Activated CD4-positive, alpha-beta T cell treated with anti-CD3 and anti-CD28 coated beads for 36 hours (primary cell): ENCODE measurements at regions of chr7 and their contacts with region 1.

Region 1: DNA sequence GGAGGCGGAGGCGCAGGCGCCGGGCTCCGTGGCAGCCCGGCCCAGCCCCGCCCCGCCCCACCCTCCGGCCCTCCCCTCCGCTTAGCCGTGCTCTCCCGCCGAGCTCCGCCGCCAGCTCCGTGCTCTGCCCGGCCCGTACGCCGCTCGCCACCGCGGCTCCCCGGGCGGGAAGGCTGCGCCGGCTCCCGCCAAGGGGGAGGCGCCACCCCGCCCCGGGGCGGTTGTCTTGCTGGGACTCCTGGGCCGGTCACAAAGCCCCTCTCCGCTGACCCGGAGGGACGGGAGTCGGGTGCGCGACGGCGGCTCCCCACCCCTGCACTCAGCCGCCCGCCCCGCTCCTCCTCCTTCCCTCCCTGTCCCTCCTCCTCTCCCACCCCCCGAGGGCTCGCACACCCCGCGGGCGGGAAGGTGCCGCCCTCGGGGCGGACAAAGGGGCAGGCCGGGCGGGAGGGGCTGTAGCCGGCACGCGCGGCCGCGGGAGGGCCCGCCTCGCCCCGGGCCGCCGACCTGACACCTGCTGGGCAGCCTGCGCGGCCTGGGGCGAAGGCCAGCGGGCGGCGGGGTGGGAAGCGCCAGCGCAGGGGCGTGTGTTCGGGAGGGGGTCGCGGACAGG is 11.5 kb upstream of the SP8 start:
- DNase-seq: peak; percentile 30
- ATAC-seq: peak; percentile 81
- H3K4me3 Mint-ChIP-seq: no peak overlapping the region
- H3K27ac Mint-ChIP-seq: no peak overlapping the region
- H3K4me1 Mint-ChIP-seq: peaks cover 16% of the 10 kb centered on the region
- H3K27me3 Mint-ChIP-seq: peaks cover 49% of the 10 kb centered on the region

Region 2: GRCh38 chr7:19107356-19108146 is 1690.6 kb before region 1 on chr7:
- CTCF ChIA-PET with region 1: no interaction called
- POLR2A ChIA-PET with region 1: no interaction called
- intact Hi-C with region 1: loop called in 1 of 2 experiments (anchors 5 kb)
- DNase-seq: no peak
- ATAC-seq: no peak
- H3K4me3 Mint-ChIP-seq: no peak overlapping the region
- H3K27ac Mint-ChIP-seq: no peak overlapping the region
- H3K4me1 Mint-ChIP-seq: peaks cover 2% of the 10 kb centered on the region
- H3K27me3 Mint-ChIP-seq: peaks cover 85% of the 10 kb centered on the region

Region 3: GRCh38 chr7:20786779-20787659 is 11.2 kb before region 1 on chr7 and contains the start of gene SP8:
- CTCF ChIA-PET with region 1: interaction called, 5 read pairs
- POLR2A ChIA-PET with region 1: no interaction called
- intact Hi-C with region 1: loop called (anchors 1 to 2 kb)
- DNase-seq: peak; percentile 64
- ATAC-seq: peak; percentile 72
- H3K4me3 Mint-ChIP-seq: peak within 1 kb of the TSS; percentile 66
- H3K27ac Mint-ChIP-seq: peak within 1 kb of the TSS; percentile 37
- H3K4me1 Mint-ChIP-seq: peaks cover 26% of the 10 kb centered on the region
- H3K27me3 Mint-ChIP-seq: peaks cover 68% of the 10 kb centered on the region
- total RNA-seq, gene SP8: not detected

Region 4: DNA sequence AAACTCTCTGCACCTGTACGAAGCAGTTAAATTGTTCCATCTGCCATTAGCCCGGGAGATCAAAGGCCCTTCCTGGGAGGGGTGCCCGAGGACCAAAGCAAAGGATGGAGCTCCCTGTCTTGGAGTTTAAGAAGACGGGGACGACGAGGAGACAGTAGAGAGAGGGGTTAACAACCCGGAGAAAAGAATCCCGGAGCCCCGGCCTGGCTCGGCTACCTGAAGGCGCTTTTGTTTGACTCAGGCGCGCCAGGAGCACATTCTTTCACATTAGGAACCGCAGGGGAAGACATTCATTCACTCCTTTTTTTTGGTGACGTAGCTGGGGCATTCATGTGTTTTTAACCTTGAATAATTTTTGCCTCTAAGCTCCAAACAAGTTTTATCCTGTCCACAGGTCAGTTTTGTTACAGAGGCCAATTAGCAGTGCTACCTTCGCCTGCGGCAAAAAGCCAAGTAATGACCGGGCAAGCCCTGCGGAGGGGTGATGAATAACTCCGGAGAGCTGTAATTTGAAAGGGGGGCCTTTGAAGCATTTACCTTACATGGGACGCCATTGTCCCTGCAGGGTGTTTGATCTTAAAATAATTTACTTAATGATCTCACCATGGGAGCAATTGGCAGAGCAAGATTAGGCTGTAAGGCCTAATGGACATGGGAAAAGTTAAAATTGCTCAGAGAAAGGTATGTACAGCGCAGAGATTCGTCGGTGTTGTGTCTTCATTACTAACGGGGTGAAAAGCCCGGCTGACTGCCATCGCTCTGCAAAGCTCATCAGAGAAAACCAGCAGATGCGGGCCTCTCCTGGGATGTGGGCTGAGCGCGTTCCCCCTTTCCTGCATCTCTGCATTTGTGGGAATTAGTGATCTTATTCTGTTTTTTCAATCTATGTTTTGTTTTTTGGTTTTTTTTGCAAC is 371.7 kb after region 1 on chr7:
- CTCF ChIA-PET with region 1: no interaction called
- POLR2A ChIA-PET with region 1: no interaction called
- intact Hi-C with region 1: loop called in 1 of 2 experiments (anchors 5 kb)
- DNase-seq: no peak
- ATAC-seq: no peak
- H3K4me3 Mint-ChIP-seq: no peak overlapping the region
- H3K27ac Mint-ChIP-seq: no peak overlapping the region
- H3K4me1 Mint-ChIP-seq: peaks cover 6% of the 10 kb centered on the region
- H3K27me3 Mint-ChIP-seq: peaks cover 66% of the 10 kb centered on the region